ENCODE measurements at regions of chr5 and their contacts with region 1.

Region 1: DNA sequence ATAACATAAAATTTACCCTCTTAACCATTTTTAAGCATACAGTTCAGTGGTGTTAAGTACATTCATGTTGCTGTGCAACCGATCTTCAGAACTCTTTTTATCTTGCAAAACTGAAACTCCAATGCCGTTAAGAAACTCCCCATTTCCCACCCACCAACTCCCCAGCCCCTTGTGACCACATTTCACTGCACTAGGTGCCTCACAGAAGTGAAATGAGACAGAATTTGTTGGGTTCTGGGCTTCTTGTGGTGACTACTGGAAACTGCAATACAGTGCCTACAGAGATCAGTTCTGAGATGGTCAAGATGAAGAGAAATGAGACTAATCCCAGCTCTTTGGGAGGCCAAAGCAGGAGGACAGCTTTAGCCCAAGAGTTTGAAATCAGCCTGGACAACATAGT is 202.1 kb upstream of the SLC30A5 start:
- DNase-seq: peak; percentile 82
- H3K4me3 Mint-ChIP-seq: no peak overlapping the region
- H3K27ac Mint-ChIP-seq: peak overlapping the region; percentile 48
- H3K4me1 Mint-ChIP-seq: peaks cover 23% of the 10 kb centered on the region
- H3K27me3 Mint-ChIP-seq: no peaks in the 10 kb centered on the region

Region 2: DNA sequence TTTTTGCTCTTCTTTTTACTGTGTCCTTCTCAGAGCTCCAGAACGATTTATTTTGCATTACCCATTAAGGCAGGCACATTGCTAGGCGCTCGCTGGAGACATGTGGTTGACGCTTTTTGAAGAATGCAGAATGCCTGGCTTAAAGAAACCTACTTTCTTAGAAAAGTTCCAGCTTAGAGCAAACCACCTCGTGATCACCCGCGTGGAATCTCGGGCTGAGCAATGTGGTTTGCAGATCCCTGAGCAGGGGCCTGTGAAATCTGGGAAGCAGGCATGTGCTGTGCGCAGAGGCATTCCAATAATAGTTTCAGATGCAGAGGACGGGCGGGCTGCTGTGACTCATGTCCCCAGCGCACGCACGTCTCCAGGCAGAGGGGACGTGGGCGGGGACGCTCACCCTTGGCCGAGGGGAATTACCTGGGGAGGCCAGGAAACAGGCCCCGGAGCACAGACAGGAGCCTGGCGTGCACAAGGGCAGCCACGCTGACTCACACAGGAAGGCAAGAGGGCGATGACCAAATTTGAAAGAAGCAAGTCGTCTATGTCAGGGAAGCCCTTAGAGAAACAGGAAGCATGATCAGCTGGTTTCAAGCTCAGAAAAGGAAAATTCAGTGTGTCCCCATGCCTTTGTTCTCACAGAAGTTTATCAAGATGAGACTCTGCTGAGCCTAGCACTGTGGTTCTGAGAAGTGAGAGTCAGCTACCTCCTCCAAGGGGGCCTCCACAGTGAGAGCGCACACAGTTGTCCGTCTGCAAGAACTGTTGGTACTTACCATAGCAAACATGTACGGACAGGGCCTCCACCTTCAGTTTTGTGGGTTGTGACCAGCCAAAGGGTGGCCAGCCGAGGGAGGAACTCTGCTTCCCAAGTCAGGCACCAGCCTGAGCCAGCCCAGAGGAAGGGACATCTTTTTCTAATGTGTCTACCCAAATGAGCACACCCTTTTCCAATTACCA is 457.5 kb before region 1 on chr5:
- intact Hi-C with region 1: loop called (anchors 5 kb)
- DNase-seq: peak; percentile 96
- H3K4me3 Mint-ChIP-seq: peak overlapping the region; percentile 66
- H3K27ac Mint-ChIP-seq: peak overlapping the region; percentile 84
- H3K4me1 Mint-ChIP-seq: peaks cover 54% of the 10 kb centered on the region
- H3K27me3 Mint-ChIP-seq: peaks cover 37% of the 10 kb centered on the region

Region 3: GRCh38 chr5:68822796-68823195 is 68.9 kb before region 1 on chr5:
- intact Hi-C with region 1: no loop called
- DNase-seq: no peak
- H3K4me3 Mint-ChIP-seq: no peak overlapping the region
- H3K27ac Mint-ChIP-seq: no peak overlapping the region
- H3K4me1 Mint-ChIP-seq: no peaks in the 10 kb centered on the region
- H3K27me3 Mint-ChIP-seq: peaks cover 13% of the 10 kb centered on the region

Measured in activated CD4-positive, alpha-beta T cell treated with anti-CD3 and anti-CD28 coated beads, Interleukin-2, amount 10 ng/mL, durations not matched to agents 24 days and 14 days (primary cell).